Lower leg skin (tissue), 4 donors: ENCODE measurements at regions of chr18 and their contacts with region 1.

Region 1: GRCh38 chr18:63422087-63422809 is at the start of gene VPS4B:
- DNase-seq: peak; percentile 99 to 100
- H3K4me3 ChIP-seq: peak within 1 kb of the TSS; percentile 99
- CTCF ChIP-seq: no peak
- POLR2A ChIP-seq: peak in 1 of 2 donors; percentile 59
- total RNA-seq, gene VPS4B: 43.6 to 59.6 (median 52.4) TPM

Region 2: GRCh38 chr18:63216516-63217311 is 205.5 kb before region 1 on chr18:
- intact Hi-C with region 1: no loop called
- DNase-seq: no peak
- H3K4me3 ChIP-seq: no peak overlapping the region
- CTCF ChIP-seq: no peak
- POLR2A ChIP-seq: no peak

Region 3: GRCh38 chr18:63339920-63340484 is 82.2 kb before region 1 on chr18:
- intact Hi-C with region 1: loop called (anchors 10 kb)
- DNase-seq: no peak
- H3K4me3 ChIP-seq: no peak overlapping the region
- CTCF ChIP-seq: no peak
- POLR2A ChIP-seq: no peak